Activated CD4-positive, alpha-beta T cell treated with anti-CD3 and anti-CD28 coated beads for 36 hours (primary cell): ENCODE measurements at regions of chr1 and their contacts with region 1.

Region 1: GRCh38 chr1:15128520-15129313 is 24.8 kb upstream of the TMEM51 start:
- DNase-seq: peak; percentile 84
- ATAC-seq: peak; percentile 97
- H3K4me3 Mint-ChIP-seq: no peak overlapping the region
- H3K27ac Mint-ChIP-seq: no peak overlapping the region
- H3K4me1 Mint-ChIP-seq: no peaks in the 10 kb centered on the region
- H3K27me3 Mint-ChIP-seq: peaks cover 3% of the 10 kb centered on the region

Region 2: DNA sequence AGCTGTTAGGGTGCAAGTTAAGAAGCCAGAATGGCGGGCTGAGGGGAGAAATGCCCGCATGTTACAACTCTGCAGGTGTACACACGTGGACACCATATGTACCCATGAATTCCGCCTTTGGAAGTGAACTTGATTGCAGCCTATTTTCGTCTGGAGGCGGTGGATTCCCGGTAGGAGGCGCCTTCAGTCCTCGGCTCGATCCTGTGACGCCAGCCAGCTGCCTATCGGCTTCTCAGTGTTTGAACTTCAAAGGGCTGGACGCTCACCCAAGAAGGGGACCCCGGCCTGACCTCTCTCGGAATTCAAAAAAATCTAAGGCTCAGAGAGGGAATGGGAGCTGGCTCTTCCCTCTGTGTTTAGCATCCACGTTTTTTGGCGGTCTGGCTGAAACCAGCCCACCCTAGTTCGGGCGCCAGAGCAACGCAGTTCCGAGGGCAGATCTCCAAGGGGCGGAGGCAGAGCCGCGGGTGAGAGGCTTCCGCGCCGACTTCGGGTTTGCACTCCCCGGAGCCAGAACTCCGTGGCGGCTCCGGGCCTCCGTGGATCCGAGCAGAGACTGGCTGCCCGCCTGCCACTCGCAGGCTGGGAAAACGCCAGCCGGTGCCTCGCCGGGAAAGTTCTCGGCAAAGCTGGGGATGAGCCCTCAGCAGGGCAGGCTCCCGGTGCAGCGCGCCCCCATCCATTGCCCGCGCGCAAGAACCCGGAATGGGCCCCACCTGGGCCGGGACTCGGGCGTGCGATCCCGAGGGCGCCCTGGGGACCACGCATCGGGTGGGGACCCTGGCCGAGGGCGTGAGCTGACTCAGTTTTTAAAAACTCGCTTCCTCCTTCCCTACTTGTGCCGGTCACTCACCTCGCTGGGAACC is 23.8 kb after region 1 on chr1:
- CTCF ChIA-PET with region 1: interaction called, 5 read pairs
- POLR2A ChIA-PET with region 1: no interaction called
- intact Hi-C with region 1: loop called in 1 of 2 experiments (anchors 1 kb)
- DNase-seq: peak; percentile 58
- ATAC-seq: peak; percentile 45
- H3K4me3 Mint-ChIP-seq: peak overlapping the region; percentile 8
- H3K27ac Mint-ChIP-seq: no peak overlapping the region
- H3K4me1 Mint-ChIP-seq: peaks cover 19% of the 10 kb centered on the region
- H3K27me3 Mint-ChIP-seq: peaks cover 47% of the 10 kb centered on the region

Region 3: GRCh38 chr1:15272009-15272788 is 143.5 kb after region 1 on chr1:
- CTCF ChIA-PET with region 1: interaction called, 82 read pairs
- POLR2A ChIA-PET with region 1: no interaction called
- intact Hi-C with region 1: loop called (anchors 1 kb)
- DNase-seq: peak; percentile 71
- ATAC-seq: peak; percentile 95
- H3K4me3 Mint-ChIP-seq: no peak overlapping the region
- H3K27ac Mint-ChIP-seq: no peak overlapping the region
- H3K4me1 Mint-ChIP-seq: peaks cover 5% of the 10 kb centered on the region
- H3K27me3 Mint-ChIP-seq: peaks cover 32% of the 10 kb centered on the region

Region 4: GRCh38 chr1:15299806-15300205 is 171.1 kb after region 1 on chr1:
- CTCF ChIA-PET with region 1: interaction called, 34 read pairs
- POLR2A ChIA-PET with region 1: no interaction called
- intact Hi-C with region 1: loop called (anchors 1 kb)
- DNase-seq: no peak
- ATAC-seq: no peak
- H3K4me3 Mint-ChIP-seq: no peak overlapping the region
- H3K27ac Mint-ChIP-seq: no peak overlapping the region
- H3K4me1 Mint-ChIP-seq: peaks cover 7% of the 10 kb centered on the region
- H3K27me3 Mint-ChIP-seq: peaks cover 5% of the 10 kb centered on the region

Region 5: DNA sequence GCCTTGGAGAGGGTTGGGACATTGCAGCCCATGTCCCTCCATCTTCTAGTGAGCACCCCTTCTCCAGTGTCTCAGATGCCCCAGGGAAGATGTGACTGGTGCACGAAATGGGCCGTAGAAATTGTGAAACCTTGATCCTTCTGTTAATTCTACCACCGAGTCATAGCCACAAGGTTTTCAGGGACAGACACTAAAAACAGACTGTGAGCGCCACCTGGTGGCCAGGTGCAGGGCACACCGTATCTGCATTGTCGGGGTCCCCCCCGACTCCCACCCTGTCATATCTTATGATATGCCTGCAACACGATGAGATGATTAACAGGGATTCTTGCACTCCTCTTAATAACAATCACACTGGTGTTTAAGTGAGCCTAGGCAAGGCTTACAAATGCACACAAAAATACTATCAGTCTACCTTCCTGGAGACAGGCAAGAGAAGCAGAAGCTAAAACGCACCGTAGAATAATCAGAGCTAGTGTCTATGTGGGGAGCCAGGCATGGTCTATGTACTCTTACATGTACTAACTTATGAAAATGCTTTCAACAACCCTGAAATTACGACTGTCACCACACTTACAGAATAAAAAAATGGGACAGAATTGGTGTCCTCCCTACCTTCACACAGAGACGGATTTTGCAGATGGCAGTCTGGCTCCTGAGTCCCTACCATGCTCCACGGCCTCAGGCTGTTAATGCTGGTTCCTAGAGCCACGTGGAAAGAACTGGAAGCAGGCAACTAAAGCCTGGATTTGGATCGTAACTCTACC is 176.2 kb after region 1 on chr1:
- CTCF ChIA-PET with region 1: interaction called, 34 read pairs
- POLR2A ChIA-PET with region 1: no interaction called
- intact Hi-C with region 1: loop called (anchors 1 kb)
- DNase-seq: peak; percentile 87
- ATAC-seq: peak; percentile 83
- H3K4me3 Mint-ChIP-seq: no peak overlapping the region
- H3K27ac Mint-ChIP-seq: no peak overlapping the region
- H3K4me1 Mint-ChIP-seq: no peaks in the 10 kb centered on the region
- H3K27me3 Mint-ChIP-seq: peaks cover 6% of the 10 kb centered on the region

Region 6: GRCh38 chr1:15430787-15431570 is 302.3 kb after region 1 on chr1:
- CTCF ChIA-PET with region 1: interaction called, 5 read pairs
- POLR2A ChIA-PET with region 1: no interaction called
- intact Hi-C with region 1: loop called in 1 of 2 experiments (anchors 10 kb)
- DNase-seq: peak; percentile 85
- ATAC-seq: peak; percentile 84
- H3K4me3 Mint-ChIP-seq: no peak overlapping the region
- H3K27ac Mint-ChIP-seq: no peak overlapping the region
- H3K4me1 Mint-ChIP-seq: peaks cover 2% of the 10 kb centered on the region
- H3K27me3 Mint-ChIP-seq: no peaks in the 10 kb centered on the region